ENCODE measurements at regions of chr2 and their contacts with region 1.

Region 1: GRCh38 chr2:11411768-11412448 is 54.1 kb downstream of the E2F6 start:
- DNase-seq: peak; percentile 63
- H3K4me3 ChIP-seq: no peak overlapping the region
- H3K27ac ChIP-seq: no peak overlapping the region
- H3K4me1 ChIP-seq: peaks cover 7% of the 10 kb centered on the region
- H3K27me3 ChIP-seq: no peaks in the 10 kb centered on the region

Region 2: GRCh38 chr2:11224887-11225286 is 187.0 kb before region 1 on chr2:
- in situ Hi-C with region 1: loop called (anchors 10 kb)
- DNase-seq: no peak
- H3K4me3 ChIP-seq: no peak overlapping the region
- H3K27ac ChIP-seq: no peak overlapping the region
- H3K4me1 ChIP-seq: no peaks in the 10 kb centered on the region
- H3K27me3 ChIP-seq: no peaks in the 10 kb centered on the region

Measured in GM23248 (cell line).